ENCODE measurements at regions of chr7 and their contacts with region 1.

Region 1: DNA sequence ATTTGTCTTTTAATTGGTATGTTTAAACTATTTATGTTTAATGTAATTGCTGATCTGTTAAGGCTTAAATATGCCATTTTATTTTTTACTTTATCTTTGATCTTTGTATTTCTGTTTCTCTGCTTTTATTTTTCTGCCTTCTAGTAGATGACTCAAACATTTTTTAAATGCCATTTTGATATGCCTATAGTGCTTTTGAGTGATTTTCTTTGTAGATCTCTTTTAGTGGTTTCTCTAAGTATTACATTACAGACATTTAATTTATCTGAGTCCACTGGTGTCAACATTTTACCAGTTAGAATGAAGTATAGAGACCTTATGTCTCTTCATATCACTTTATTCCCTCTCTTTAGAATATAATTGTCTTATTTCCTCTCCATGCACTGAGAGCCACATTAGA is 32.7 kb downstream of the IL6 start:
- DNase-seq: no peak

Region 2: GRCh38 chr7:21580073-21580521 is 1179.6 kb before region 1 on chr7:
- in situ Hi-C with region 1: no loop called
- DNase-seq: no peak

Region 3: GRCh38 chr7:22559829-22560489 is 199.8 kb before region 1 on chr7:
- in situ Hi-C with region 1: loop called (anchors 5 kb)
- DNase-seq: peak; percentile 95

Measured in SK-MEL-5 (cell line).